ENCODE measurements at regions of chr10 and their contacts with region 1.

Region 1: GRCh38 chr10:119207367-119207668 is at the start of gene GRK5:
- DNase-seq: peak; percentile 65
- H3K4me3 ChIP-seq: peak within 1 kb of the TSS; percentile 63 to 94 (median 91)
- H3K27ac ChIP-seq: peak within 1 kb of the TSS; percentile 62
- H3K4me1 ChIP-seq: peaks cover 45% of the 10 kb centered on the region
- H3K27me3 ChIP-seq: no peaks in the 10 kb centered on the region
- CTCF ChIP-seq: no peak
- polyA plus RNA-seq, gene GRK5: 3.6 to 12.2 TPM (median 7.6 TPM) in 3 replicates

Region 2: DNA sequence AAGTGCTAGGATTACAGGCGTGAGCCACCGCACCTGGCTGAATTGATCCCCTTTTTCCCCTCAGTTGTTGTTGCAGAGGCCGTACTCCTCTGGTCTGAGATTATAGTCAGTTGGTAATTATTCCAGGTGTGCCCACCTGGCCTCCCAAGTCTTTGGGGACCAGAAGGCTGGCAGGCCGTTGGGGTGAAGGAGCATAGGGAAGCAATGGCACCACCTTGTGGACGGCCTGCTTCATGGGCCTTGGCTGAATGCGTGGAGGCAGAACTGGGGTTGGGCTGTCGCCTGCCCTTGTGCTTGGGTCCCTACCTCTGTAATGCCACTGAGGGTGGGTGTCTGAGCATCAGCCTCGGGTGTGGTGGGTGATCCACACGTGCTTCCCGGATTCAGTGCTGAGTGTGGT is 209.5 kb after region 1 on chr10:
- dilution Hi-C with region 1: loop called (anchors 25 kb)
- DNase-seq: no peak
- H3K4me3 ChIP-seq: no peak overlapping the region
- H3K27ac ChIP-seq: no peak overlapping the region
- H3K4me1 ChIP-seq: no peaks in the 10 kb centered on the region
- H3K27me3 ChIP-seq: no peaks in the 10 kb centered on the region
- CTCF ChIP-seq: peak; percentile 88 to 99 (median 94)